K562 (cell line): ENCODE measurements at regions of chr10 and their contacts with region 1.

Region 1: DNA sequence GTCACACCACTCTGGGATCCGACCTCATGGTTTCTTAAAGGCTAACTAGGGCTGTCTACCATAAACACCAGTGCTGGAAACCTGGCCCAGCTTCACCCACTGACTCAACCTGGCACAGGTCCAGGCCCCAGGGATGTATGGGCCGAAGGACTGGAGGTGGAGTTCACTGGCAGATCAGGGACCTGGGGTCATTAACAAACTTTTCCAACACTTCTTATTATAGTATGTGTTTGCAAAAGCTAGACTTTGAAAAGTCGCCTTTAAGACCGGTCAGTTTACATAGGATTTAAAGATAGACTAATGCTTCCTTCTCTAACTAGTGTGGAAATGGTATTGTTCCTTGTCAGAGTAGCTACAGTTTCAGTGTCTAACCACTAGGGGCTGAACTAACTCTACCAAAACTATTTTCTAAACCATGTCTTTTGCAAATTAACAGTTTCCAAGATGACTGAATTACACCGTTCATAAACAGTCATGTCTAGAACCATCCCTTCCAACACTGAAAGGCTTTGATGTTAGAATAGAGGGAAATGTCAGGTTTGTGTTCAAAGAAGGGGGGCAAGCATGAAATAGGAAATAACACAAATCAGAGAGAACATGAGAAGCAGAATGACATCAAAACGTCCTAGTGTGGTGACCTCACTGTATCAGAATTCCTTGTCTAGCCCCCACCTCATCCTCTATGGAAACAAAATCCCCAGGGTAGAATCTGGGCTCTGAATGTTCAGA is 29.7 kb downstream of the STN1 start:
- DNase-seq: peak; percentile 33 to 46 (median 38)
- ATAC-seq: peak; percentile 80
- H3K4me3 ChIP-seq: no peak overlapping the region
- H3K27ac ChIP-seq: no peak overlapping the region
- H3K4me1 ChIP-seq: no peaks in the 10 kb centered on the region
- H3K27me3 ChIP-seq: no peaks in the 10 kb centered on the region
- CTCF ChIP-seq: peak; percentile 37 to 81 (median 73); a peak in 5 of 6 replicates
- EP300 ChIP-seq: no peak
- POLR2A ChIP-seq: no peak
- RAD21 ChIP-seq: peak; percentile 76 to 88

Region 2: DNA sequence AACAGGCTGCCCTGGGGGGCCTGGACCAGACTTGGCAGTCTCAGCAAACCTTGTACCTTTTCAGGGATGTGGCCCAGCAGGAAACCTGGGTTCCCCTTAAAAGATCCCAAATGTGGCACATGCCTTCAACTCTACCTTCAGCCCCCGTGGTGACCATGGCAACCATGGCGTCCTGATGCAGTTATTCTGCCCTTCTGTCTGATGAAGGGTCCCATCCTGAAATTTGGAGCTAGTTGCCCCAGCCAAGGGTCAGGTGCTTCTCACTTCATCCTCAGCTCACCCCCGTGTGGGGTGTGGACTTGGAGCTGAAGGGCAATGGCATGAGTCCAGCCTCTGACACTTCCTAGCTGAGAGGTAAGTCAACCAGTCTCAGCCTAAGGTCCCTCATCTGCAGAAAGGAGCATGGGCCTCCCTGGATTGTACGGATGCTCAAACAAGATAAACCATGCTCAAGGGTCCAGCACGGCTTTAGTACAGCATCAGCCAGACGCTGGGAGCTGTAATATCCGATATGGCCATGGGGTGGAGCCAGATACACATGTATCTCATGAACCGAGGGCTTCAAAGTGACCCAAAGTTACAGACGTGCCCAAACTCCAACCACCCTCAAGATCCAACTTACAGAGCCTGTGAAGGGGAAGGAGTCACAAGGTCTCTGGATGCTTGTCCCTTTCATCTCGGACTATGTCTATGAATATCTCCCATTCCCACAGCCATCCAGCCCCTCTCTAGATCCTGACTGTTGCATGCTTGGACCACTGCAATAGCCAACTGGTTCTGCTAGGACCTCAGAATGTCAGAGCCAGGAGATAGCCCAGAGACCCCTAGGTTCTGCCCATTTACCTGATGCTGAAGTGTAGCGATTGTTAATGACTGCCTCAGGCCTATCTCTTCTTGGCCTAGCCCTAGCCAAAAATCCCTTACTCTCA is 175.4 kb before region 1 on chr10:
- CTCF ChIA-PET with region 1: interaction called, 16 read pairs
- POLR2A ChIA-PET with region 1: no interaction called
- in situ Hi-C with region 1: loop called (anchors 10 kb)
- intact Hi-C with region 1: loop called (anchors 1 kb)
- DNase-seq: peak; percentile 56 to 75 (median 62)
- ATAC-seq: peak; percentile 93
- H3K4me3 ChIP-seq: no peak overlapping the region
- H3K27ac ChIP-seq: no peak overlapping the region
- H3K4me1 ChIP-seq: no peaks in the 10 kb centered on the region; a peak in 1 of 5 replicates
- H3K27me3 ChIP-seq: peaks cover 0 to 20% of the 10 kb centered on the region in 2 experiments; a peak in 1 of 5 replicates
- CTCF ChIP-seq: peak; percentile 79 to 87 (median 85)
- EP300 ChIP-seq: no peak
- POLR2A ChIP-seq: no peak
- RAD21 ChIP-seq: peak; percentile 87 to 90

Region 3: DNA sequence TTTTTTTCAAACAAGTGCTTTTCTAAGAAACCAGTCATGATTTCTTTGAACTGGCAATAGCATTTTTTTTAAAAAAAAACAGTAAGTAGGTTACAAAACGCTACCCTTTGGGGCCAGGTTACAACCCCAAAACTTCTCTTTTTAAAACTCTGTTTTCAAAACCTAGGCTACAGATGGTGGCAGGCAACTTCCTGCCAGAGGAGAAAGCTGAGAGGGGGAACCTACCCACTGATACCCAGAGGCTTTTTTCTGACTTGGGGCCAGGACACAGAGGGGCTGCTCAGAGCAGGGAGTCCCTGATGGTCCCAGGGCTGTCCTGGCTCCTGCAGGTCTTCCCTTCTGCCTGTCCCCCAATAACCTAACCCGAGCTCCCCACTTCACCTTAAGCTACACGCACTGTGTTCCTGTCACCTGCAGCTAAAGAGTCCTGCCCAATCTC is 22.8 kb after region 1 on chr10:
- CTCF ChIA-PET with region 1: no interaction called
- POLR2A ChIA-PET with region 1: no interaction called
- in situ Hi-C with region 1: no loop called
- intact Hi-C with region 1: no loop called
- DNase-seq: peak in 1 of 4 experiments; percentile 16
- ATAC-seq: no peak
- H3K4me3 ChIP-seq: no peak overlapping the region
- H3K27ac ChIP-seq: peak overlapping the region; percentile 49; the same call in 2 of the 3 replicates
- H3K4me1 ChIP-seq: peaks cover 8 to 22% of the 10 kb centered on the region in 2 experiments
- H3K27me3 ChIP-seq: no peaks in the 10 kb centered on the region
- CTCF ChIP-seq: no peak
- EP300 ChIP-seq: no peak
- POLR2A ChIP-seq: no peak
- RAD21 ChIP-seq: no peak

Region 4: DNA sequence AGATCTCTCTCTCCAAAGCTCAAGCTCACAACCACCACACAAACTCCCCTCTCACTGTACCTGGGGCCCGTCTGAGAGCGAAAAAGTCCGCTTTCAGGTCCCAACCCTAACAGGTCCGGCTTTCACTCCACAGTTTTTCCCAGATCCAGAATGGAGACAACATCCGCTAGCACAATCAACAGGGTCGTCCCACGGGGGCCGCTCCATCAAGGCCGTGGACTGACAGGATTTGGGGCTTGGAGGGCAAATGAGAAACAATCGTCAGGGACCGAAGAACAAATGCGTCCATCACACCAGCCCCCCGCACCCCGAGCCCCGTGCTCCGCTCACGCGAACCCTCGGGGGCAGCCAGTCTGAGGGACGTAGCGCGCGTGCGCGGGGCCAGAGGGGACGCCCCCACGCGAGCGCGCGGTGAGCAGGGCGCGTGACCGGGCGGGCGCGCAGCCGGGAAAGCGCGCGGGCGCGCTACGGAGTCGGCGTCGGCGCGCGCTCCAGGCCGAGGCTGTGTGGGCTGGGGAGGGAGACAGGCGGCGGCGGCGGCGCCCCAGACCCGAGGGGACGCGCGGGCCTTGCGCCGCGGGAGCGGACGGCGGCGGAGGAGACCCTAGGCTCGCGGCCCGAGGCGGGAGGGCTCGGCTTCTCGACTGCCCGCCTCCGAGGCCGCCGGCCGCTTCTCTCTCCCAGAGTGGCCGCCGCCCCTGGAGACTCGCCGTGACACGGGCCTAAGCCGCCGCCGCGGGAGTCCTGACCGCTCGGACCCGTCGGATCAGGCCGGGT is 78.6 kb after region 1 on chr10 and contains the start of gene SLK:
- CTCF ChIA-PET with region 1: no interaction called
- POLR2A ChIA-PET with region 1: no interaction called
- in situ Hi-C with region 1: loop called (anchors 5 kb)
- intact Hi-C with region 1: loop called (anchors 5 kb)
- DNase-seq: peak; percentile 76 to 88 (median 83)
- ATAC-seq: peak; percentile 59
- H3K4me3 ChIP-seq: peak within 1 kb of the TSS; percentile 90
- H3K27ac ChIP-seq: peak within 1 kb of the TSS; percentile 98
- H3K4me1 ChIP-seq: peaks cover 1 to 5% of the 10 kb centered on the region in 2 experiments; a peak in 2 of 5 replicates
- H3K27me3 ChIP-seq: no peaks in the 10 kb centered on the region
- CTCF ChIP-seq: no peak
- EP300 ChIP-seq: no peak
- POLR2A ChIP-seq: peak; percentile 81
- RAD21 ChIP-seq: no peak
- polyA plus RNA-seq, gene SLK: 8.2 to 9.2 TPM

Region 5: DNA sequence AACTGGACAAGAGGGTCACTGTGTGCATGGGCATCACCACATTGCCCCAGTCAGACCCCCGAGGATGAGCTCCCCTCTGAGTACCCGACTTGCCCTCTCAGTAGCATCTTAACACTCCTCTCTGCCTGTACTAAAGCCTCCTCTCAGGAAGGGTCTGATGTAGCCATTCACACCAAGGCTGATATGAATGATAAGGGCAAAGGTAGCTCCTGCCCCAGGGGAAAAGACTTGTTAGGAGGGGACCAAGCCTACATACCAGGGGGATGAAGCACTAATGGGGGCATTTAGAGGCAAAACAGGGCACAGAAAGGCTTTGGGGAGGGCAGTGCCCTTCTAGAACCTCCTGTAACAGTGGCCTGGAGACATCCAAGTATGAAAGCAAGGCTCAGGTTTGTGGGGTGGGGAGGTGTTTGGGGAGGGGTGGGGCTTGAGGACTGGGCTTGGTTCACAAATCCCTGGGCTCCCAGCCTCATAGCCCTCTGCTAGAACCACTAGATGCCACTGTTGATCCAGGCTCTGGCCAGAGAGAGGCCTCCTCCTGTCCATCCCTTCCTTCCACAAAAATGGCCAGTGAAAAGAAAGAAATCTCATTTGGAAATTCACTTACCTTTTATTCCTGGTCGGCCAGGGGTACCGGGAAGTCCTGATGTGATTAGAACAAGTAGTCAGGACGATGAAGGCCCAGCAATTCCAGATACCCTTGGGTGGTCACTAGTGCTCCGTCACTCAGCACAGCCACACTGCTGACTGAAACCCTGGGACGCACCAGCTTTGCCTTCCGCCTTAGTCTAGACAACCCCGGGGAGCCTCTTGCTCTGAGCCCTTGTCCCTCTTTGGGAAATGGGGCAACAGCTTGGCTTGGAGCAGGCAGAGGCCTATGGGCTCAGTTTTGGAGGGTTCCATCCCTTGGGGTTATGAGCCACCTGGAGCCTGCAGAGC is 157.1 kb after region 1 on chr10:
- CTCF ChIA-PET with region 1: no interaction called
- POLR2A ChIA-PET with region 1: no interaction called
- in situ Hi-C with region 1: no loop called
- intact Hi-C with region 1: loop called (anchors 10 kb)
- DNase-seq: peak; percentile 17 to 41 (median 30)
- ATAC-seq: peak; percentile 88
- H3K4me3 ChIP-seq: no peak overlapping the region
- H3K27ac ChIP-seq: no peak overlapping the region
- H3K4me1 ChIP-seq: no peaks in the 10 kb centered on the region; a peak in 1 of 5 replicates
- H3K27me3 ChIP-seq: peaks cover 9 to 78% of the 10 kb centered on the region in 2 experiments; a peak in 3 of 5 replicates
- CTCF ChIP-seq: peak; percentile 38 to 57 (median 44); a peak in 5 of 6 replicates
- EP300 ChIP-seq: no peak
- POLR2A ChIP-seq: no peak
- RAD21 ChIP-seq: peak; percentile 48 to 70